Ascending aorta (tissue), 2 donors: ENCODE measurements at regions of chrX and their contacts with region 1.

Region 1: DNA sequence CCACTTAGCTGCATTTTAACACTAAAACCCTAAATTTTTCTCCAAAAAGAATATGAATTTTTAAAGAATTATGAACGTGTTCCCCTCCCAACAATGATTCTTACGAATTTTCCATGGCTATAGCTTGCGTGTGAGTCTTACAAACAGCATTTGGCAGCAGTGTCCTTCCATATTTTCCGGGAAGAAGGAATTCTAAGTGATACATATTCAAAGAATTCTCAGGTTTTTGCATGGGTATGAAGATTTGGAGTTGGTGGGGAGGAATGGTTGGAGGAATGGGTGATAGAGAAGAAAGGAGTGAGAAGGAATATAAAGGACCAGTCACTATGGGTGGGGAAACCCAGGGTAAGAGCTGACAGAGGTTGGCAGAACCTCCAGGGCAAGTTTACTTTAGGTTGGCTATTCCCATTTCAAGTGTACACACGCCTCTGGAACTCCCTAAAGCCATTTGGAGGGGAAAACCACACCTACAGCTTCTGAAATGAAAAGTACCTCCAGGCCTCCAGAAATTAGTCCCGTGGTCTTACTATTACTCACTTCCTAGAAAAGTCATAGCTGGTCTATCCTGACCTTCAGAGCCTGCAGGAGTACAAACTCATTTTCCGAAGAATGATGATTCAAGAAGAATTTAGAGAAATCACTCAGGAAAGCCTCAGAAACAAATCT is 420.8 kb upstream of the DIPK2B start:
- DNase-seq: no peak
- H3K4me3 ChIP-seq: no peak overlapping the region
- H3K27ac ChIP-seq: peak overlapping the region; percentile 86
- H3K4me1 ChIP-seq: peaks cover 9 to 23% of the 10 kb centered on the region in 2 donors
- H3K27me3 ChIP-seq: no peaks in the 10 kb centered on the region
- CTCF ChIP-seq: no peak

Region 2: GRCh38 chrX:45571453-45571852 is 50.1 kb before region 1 on chrX:
- intact Hi-C with region 1: no loop called
- DNase-seq: no peak
- H3K4me3 ChIP-seq: no peak overlapping the region
- H3K27ac ChIP-seq: no peak overlapping the region
- H3K4me1 ChIP-seq: no peaks in the 10 kb centered on the region
- H3K27me3 ChIP-seq: no peaks in the 10 kb centered on the region
- CTCF ChIP-seq: no peak

Region 3: GRCh38 chrX:45710081-45710801 is 88.7 kb after region 1 on chrX:
- intact Hi-C with region 1: loop called (anchors 5 kb)
- DNase-seq: no peak
- H3K4me3 ChIP-seq: no peak overlapping the region
- H3K27ac ChIP-seq: peak overlapping the region; percentile 26 to 54
- H3K4me1 ChIP-seq: peaks cover 0 to 3% of the 10 kb centered on the region in 2 donors
- H3K27me3 ChIP-seq: no peaks in the 10 kb centered on the region
- CTCF ChIP-seq: no peak

Region 4: GRCh38 chrX:45769761-45770582 is 148.5 kb after region 1 on chrX:
- intact Hi-C with region 1: loop called (anchors 10 kb)
- DNase-seq: peak; percentile 55 to 86
- H3K4me3 ChIP-seq: peak overlapping the region; percentile 46 to 61
- H3K27ac ChIP-seq: peak overlapping the region; percentile 76 to 77
- H3K4me1 ChIP-seq: no peaks in the 10 kb centered on the region
- H3K27me3 ChIP-seq: no peaks in the 10 kb centered on the region
- CTCF ChIP-seq: no peak

Region 5: DNA sequence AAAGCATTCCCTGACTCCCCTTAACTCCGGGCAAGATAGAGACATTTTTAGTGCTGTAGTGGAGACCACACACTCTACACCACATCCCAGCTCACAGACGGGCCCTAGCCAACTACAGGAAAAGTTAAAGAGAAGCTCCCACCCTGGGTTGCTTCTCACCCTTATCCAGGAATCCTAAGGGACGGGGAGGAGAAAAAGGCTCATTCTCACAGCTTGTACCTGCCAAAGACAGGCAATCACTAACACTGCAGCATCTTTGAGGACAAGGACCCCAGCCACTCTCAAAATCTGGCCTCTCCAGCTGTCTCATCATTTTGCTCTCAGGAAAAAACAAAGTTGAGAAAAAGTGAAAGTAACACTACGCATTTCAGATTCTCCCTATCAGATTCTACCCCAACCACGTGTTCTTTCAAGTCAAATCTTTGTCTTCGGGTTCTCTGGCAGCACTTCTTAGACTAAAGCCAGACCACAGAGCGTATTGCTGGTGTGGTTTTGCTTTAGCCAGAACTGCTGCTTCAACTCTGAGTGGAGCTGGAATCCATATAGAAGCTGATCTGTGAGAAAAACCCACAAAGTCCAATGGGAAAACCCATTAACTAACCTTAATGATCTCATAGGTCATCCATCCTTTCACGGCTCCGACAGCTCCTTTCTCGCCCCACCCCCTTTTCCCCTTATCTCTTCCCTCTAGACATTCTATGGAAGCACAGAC is 185.1 kb after region 1 on chrX:
- intact Hi-C with region 1: loop called (anchors 5 kb)
- DNase-seq: no peak
- H3K4me3 ChIP-seq: peak overlapping the region; percentile 38 to 59
- H3K27ac ChIP-seq: peak overlapping the region; percentile 62 to 67
- H3K4me1 ChIP-seq: no peaks in the 10 kb centered on the region
- H3K27me3 ChIP-seq: no peaks in the 10 kb centered on the region
- CTCF ChIP-seq: no peak

Region 6: GRCh38 chrX:46325312-46325877 is 703.9 kb after region 1 on chrX:
- intact Hi-C with region 1: loop called (anchors 10 kb)
- DNase-seq: peak in 1 of 2 donors; percentile 73
- H3K4me3 ChIP-seq: peak overlapping the region in 1 of 2 donors; percentile 20
- H3K27ac ChIP-seq: peak overlapping the region; percentile 63 to 71
- H3K4me1 ChIP-seq: peaks cover 0 to 4% of the 10 kb centered on the region in 2 donors
- H3K27me3 ChIP-seq: no peaks in the 10 kb centered on the region
- CTCF ChIP-seq: no peak